HEK293 (cell line): ENCODE measurements at regions of chr10 and their contacts with region 1.

Region 1: DNA sequence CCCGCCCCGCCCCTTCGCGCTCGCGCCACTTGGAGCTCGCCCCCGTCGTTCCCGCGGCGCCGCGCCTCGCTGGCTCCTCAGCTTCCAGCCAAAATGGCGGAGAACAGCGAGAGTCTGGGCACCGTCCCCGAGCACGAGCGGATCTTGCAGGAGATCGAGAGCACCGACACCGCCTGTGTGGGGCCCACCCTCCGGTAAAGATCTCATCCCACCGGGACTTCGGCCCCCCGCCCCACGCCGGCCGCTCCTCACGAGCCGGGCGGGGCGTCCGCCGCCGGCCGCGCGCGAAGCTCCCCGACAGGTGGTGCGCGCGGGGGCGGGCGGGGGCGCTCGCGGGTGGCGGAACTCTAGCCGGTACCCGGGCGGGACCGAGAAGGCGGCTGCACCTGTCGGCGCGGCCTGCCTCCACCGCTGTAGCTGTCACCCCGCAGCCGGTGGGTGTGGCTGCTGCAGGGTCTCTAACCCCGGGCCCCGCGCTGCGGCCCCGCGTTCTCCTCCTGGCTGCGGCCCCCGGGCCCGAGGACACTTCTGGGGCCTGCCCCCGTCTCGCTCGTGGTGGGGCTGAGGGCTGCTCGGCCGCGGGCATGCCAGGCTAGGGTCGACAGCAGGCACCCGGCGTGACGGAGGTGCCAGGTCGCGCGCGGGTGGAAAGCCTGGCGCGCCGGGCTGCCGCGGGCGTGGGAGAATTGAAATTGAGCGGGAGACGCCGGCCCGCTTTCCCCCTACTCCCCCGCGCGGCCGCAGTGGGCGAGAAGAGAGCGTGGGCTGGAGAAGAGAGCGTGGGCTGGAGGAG is at the start of gene EXOC6:
- H3K4me3 ChIP-seq: peak within 1 kb of the TSS; percentile 90
- H3K27ac ChIP-seq: peak within 1 kb of the TSS; percentile 89
- H3K4me1 ChIP-seq: peaks cover 3% of the 10 kb centered on the region; the same call in 1 of the 2 replicates
- CTCF ChIP-seq: peak; percentile 48; the same call in 1 of the 2 replicates

Region 2: GRCh38 chr10:92757066-92757710 is 91.4 kb before region 1 on chr10:
- CTCF ChIA-PET with region 1: interaction called, 13 read pairs
- POLR2A ChIA-PET with region 1: no interaction called
- H3K4me3 ChIP-seq: no peak overlapping the region
- H3K27ac ChIP-seq: peak overlapping the region; percentile 49
- H3K4me1 ChIP-seq: peaks cover 15% of the 10 kb centered on the region
- CTCF ChIP-seq: peak; percentile 44; the same call in 1 of the 2 replicates

Region 3: DNA sequence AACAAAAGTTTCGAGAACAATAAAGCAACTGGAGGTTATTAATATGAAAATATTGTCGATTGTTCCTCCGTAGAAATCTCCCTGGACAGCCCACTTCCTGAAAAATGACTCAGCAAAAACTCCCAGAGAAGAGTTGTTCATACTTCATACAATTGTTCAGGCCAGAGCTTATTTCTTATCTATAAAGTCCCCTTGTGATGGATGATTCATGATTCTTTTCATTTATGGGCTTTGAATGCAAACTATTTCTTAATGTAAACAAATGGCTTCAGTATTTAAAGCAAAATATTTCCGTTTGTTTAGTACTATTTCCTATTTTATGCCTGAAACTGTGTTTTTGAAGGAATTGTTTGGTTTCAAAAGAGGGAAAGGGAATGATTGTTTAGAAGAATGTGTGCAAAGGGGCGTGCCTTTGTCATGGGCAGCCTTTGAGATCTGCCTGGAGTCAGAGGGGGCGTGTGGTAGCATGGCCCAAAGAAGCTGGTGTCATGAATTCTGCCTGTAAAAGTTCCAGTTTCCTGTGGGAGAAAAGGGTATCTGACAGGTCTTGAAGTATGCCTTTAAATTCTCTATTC is 26.5 kb before region 1 on chr10:
- CTCF ChIA-PET with region 1: interaction called, 17 read pairs
- POLR2A ChIA-PET with region 1: no interaction called
- H3K4me3 ChIP-seq: no peak overlapping the region
- H3K27ac ChIP-seq: no peak overlapping the region
- H3K4me1 ChIP-seq: no peaks in the 10 kb centered on the region
- CTCF ChIP-seq: no peak

Region 4: GRCh38 chr10:92829042-92829785 is 19.4 kb before region 1 on chr10:
- CTCF ChIA-PET with region 1: interaction called, 15 read pairs
- POLR2A ChIA-PET with region 1: no interaction called
- H3K4me3 ChIP-seq: no peak overlapping the region
- H3K27ac ChIP-seq: no peak overlapping the region
- H3K4me1 ChIP-seq: no peaks in the 10 kb centered on the region
- CTCF ChIP-seq: no peak

Region 5: GRCh38 chr10:92867235-92867634 is 18.6 kb after region 1 on chr10:
- CTCF ChIA-PET with region 1: interaction called, 13 read pairs
- POLR2A ChIA-PET with region 1: interaction called, 6 read pairs
- H3K4me3 ChIP-seq: no peak overlapping the region
- H3K27ac ChIP-seq: no peak overlapping the region
- H3K4me1 ChIP-seq: peaks cover 8% of the 10 kb centered on the region
- CTCF ChIP-seq: no peak

Region 6: DNA sequence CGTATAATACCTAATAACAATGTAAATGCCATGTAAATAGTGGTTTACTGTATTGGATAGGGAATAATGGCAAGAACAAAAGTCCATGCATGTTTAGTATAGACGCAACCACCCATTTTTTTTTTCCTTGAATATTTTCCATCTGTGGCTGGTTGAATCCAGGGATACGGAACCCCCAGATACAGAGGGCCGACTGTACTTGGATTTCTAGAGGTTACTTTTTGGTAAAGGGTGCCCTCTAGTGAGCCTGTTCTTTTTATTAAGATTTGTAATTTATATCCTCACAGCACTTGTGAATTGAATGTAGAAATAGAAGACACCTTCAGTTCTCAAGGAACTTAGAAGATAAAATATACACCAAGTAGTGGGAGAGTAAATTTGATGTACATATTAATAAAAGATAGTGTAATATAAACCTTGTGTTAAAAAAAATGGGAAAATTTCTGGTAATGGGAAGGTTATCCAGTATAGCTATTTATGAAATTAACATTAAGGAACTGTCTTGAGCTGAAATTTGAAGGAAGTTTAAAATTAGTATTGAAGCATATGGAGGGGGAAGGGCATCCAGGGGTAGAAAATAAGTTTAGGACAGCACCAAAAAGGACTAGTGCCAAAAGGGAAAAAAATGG is 31.7 kb after region 1 on chr10:
- CTCF ChIA-PET with region 1: interaction called, 23 read pairs
- POLR2A ChIA-PET with region 1: interaction called, 5 read pairs
- H3K4me3 ChIP-seq: no peak overlapping the region
- H3K27ac ChIP-seq: no peak overlapping the region
- H3K4me1 ChIP-seq: no peaks in the 10 kb centered on the region
- CTCF ChIP-seq: no peak

Region 7: GRCh38 chr10:93496322-93497041 is 647.8 kb after region 1 on chr10 and contains the start of gene CEP55:
- CTCF ChIA-PET with region 1: no interaction called
- POLR2A ChIA-PET with region 1: interaction called, 10 read pairs
- H3K4me3 ChIP-seq: peak within 1 kb of the TSS; percentile 72
- H3K27ac ChIP-seq: peak within 1 kb of the TSS; percentile 87
- H3K4me1 ChIP-seq: no peaks in the 10 kb centered on the region; the same call in 1 of the 2 replicates
- CTCF ChIP-seq: 0 out of 2 replicates have a peak, but pooled peaks have one; percentile 14